Left cardiac atrium (tissue), 4 donors: ENCODE measurements at regions of chr10 and their contacts with region 1.

Region 1: DNA sequence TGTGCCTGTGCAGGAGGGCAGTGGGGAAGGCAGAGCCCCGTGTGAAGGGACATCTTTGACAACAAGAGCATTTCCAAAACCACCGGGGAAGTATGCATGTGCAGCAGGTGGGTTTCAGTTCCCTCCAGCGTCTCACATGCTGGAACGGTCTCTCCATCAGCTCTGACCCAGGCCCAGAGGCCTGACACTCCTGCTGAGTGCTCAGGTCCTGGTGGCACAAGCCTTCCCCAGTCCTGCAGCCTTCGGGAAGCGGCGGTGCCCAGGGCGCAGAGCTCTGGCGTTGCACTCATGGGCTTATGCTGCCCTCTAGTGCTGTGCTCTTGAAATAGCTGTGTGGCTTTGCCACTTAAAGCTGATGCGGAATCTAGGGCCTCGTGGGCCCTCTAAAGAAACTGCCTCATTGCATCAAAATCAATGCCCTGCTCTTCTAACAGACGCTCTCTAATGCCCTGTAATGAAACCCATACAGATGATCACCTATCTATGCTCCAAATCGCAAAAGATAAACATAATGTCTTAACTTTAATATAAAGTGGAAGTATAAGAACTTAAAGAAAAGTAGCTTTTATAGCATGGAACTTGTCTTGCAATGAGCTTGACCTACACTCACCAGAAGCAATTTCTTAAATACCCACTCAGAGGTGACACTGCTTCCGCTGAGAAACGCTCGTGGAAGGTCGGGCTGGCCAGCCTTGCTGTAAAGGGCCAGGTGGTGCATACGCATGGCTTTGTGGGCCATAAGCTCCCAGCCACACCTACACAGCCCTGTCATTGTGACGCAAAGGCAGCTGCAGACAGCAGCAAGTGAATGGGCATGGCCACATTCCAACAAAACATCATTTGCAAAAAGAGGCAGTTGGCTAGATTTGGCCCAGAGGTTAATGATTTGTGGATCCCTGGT is 38.6 kb downstream of the CLRN3 start:
- DNase-seq: peak; percentile 65
- ATAC-seq: peak; percentile 89 to 95

Region 2: GRCh38 chr10:127563718-127564553 is 290.2 kb before region 1 on chr10:
- intact Hi-C with region 1: loop called in 1 of 2 experiments (anchors 10 kb)
- DNase-seq: peak; percentile 23
- ATAC-seq: no peak

Region 3: GRCh38 chr10:127694580-127695193 is 159.4 kb before region 1 on chr10:
- intact Hi-C with region 1: no loop called
- DNase-seq: no peak
- ATAC-seq: no peak

Region 4: GRCh38 chr10:127715782-127716378 is 138.2 kb before region 1 on chr10:
- intact Hi-C with region 1: loop called (anchors 5 kb)
- DNase-seq: no peak
- ATAC-seq: no peak

Region 5: GRCh38 chr10:127945335-127945734 is 91.2 kb after region 1 on chr10:
- intact Hi-C with region 1: no loop called
- DNase-seq: no peak
- ATAC-seq: peak; percentile 57 to 58

Region 6: DNA sequence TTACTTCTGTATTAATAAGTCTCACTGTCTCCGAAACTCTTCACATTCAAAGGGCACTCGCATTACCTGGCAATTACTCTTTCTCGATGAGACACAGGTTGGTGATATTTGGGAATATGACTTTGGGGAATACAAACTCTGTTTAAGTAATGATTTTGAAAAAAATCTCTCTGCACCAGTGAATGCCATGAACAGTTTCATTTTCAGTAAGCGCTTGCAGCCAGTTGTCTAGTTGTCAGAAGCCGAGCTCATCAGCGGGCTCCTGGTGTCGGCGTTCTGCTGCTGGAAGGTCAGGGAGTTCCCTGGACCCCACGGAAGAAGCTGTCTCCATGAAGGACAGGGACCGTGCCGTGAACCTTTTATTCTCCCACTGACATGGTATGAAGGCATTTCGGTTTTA is 110.5 kb after region 1 on chr10:
- intact Hi-C with region 1: no loop called
- DNase-seq: no peak
- ATAC-seq: no peak